Activated CD4-positive, alpha-beta T cell treated with anti-CD3 and anti-CD28 coated beads, Interleukin-2, amount 10 ng/mL, durations not matched to agents 24 days and 14 days (primary cell): ENCODE measurements at regions of chr1 and their contacts with region 1.

Region 1: DNA sequence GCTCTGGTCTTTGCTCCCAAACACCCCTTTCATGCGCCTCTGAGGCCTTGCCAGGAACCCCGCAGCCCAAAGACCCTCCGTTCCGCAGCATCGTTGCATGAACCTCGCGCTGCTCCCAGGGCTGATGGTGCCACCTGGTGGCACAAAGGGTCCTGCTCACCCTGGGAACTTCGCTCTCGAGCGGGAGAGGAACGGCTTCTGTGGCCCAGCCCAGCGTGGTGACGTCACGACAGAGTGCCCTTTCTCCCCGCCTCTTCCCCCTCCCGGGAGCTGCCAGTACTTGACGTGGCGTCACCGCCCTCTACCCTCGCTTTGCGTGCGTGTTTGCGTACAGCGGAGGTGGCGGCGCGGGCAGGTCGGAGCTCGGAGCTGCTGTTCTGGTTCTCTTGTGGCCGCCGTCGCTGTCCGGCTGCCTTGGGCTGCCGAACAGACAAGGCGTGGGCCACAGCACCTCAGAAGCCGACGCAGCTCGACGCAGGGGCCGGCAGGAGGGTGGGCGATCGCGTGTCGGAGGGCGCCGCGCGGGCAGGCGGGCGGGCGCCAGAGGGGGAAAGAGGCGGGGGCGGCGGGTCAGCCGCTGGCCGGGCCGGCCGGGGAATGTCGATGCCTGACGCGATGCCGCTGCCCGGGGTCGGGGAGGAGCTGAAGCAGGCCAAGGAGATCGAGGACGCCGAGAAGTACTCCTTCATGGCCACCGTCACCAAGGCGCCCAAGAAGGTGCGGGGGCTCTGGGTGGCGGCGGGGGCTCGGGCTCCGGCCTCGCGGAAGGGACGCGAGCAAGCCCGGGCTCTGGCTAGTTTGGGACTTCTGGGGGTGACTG is at the start of gene AHCYL1:
- DNase-seq: peak; percentile 100
- H3K4me3 Mint-ChIP-seq: peak within 1 kb of the TSS; percentile 99
- H3K27ac Mint-ChIP-seq: peak within 1 kb of the TSS; percentile 97
- H3K4me1 Mint-ChIP-seq: peaks cover 37% of the 10 kb centered on the region
- H3K27me3 Mint-ChIP-seq: peaks cover 1% of the 10 kb centered on the region
- total RNA-seq, gene AHCYL1: 67.1 and 75.3 TPM in 2 replicates

Region 2: DNA sequence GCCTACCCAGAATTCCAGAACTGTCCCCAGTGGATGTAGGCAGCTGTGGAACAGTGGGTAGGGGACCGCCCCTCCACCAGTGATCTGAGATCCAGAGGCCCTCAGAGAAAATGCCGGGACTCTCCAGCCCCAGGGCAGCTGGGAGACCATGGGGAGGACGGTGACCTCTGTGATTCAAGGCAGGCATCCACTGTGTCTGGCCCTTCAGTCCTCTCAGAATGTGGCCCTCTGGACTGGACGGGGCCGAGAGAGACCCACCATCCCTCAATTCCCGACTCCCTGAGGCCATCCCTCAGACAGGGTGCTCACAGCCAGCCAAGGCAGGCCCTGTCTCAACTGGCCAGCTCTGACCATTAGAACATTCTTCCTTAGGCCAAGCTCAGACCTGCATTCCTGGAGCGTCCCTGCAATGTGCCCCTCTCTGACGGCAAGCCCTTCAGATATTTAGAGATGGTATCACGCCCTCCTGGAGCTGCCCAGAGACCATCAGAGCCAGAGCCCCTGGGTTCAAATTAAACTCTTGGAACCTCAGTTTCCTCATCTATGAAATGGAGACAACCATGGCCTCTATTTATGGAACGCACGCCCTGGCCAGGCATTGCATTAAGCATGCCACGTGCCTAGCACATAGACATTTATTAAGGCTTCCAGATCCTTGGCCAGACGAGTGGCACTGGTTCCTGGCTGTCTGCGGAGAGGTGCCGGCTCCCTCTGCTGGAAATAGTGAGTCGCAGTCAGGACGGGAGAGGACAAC is 211.3 kb before region 1 on chr1:
- intact Hi-C with region 1: loop called (anchors 1 kb)
- DNase-seq: peak; percentile 91
- H3K4me3 Mint-ChIP-seq: no peak overlapping the region
- H3K27ac Mint-ChIP-seq: no peak overlapping the region
- H3K4me1 Mint-ChIP-seq: peaks cover 20% of the 10 kb centered on the region
- H3K27me3 Mint-ChIP-seq: peaks cover 3% of the 10 kb centered on the region

Region 3: GRCh38 chr1:110011527-110012041 is 26.9 kb after region 1 on chr1:
- intact Hi-C with region 1: loop called (anchors 2 kb)
- DNase-seq: peak; percentile 84
- H3K4me3 Mint-ChIP-seq: no peak overlapping the region
- H3K27ac Mint-ChIP-seq: peak overlapping the region; percentile 31
- H3K4me1 Mint-ChIP-seq: peaks cover 10% of the 10 kb centered on the region
- H3K27me3 Mint-ChIP-seq: no peaks in the 10 kb centered on the region